CD8-positive, alpha-beta T cell (primary cell): ENCODE measurements at regions of chr4 and their contacts with region 1.

Region 1: GRCh38 chr4:43132010-43132582 is 239.6 kb downstream of the GRXCR1 start:
- DNase-seq: peak in 2 of 9 experiments; percentile 5 to 9
- ATAC-seq: no peak
- H3K4me3 ChIP-seq: no peak overlapping the region
- H3K4me3 Mint-ChIP-seq: no peak overlapping the region
- H3K27ac ChIP-seq: no peak overlapping the region
- H3K27ac Mint-ChIP-seq: no peak overlapping the region
- H3K4me1 ChIP-seq: no peaks in the 10 kb centered on the region
- H3K4me1 Mint-ChIP-seq: no peaks in the 10 kb centered on the region
- H3K27me3 ChIP-seq: no peaks in the 10 kb centered on the region
- H3K27me3 Mint-ChIP-seq: no peaks in the 10 kb centered on the region
- CTCF ChIP-seq: peak; percentile 32

Region 2: DNA sequence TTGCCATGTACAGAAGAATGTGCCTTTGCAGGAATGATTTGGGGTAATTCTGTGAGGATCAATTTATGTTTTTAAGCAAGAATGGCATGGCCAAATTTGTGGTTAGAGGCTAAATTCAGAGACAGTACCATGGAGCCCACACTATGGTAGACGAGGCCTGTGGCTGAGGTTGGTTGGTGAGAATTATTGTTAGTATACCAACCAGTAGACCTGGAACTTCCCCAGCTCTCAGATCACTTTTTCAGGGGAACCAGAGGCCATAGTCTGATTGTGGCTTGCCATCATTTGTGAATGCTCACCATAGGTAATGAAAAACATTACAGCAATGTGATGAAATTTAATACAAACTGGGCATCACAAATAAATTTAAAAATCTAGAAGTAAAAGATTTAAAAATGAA is 678.5 kb before region 1 on chr4:
- CTCF ChIA-PET with region 1: no interaction called
- POLR2A ChIA-PET with region 1: no interaction called
- intact Hi-C with region 1: no loop called
- DNase-seq: no peak
- ATAC-seq: no peak
- H3K4me3 ChIP-seq: no peak overlapping the region
- H3K4me3 Mint-ChIP-seq: no peak overlapping the region
- H3K27ac ChIP-seq: no peak overlapping the region
- H3K27ac Mint-ChIP-seq: no peak overlapping the region
- H3K4me1 ChIP-seq: no peaks in the 10 kb centered on the region
- H3K4me1 Mint-ChIP-seq: peaks cover 2% of the 10 kb centered on the region
- H3K27me3 ChIP-seq: no peaks in the 10 kb centered on the region
- H3K27me3 Mint-ChIP-seq: no peaks in the 10 kb centered on the region
- CTCF ChIP-seq: no peak

Region 3: DNA sequence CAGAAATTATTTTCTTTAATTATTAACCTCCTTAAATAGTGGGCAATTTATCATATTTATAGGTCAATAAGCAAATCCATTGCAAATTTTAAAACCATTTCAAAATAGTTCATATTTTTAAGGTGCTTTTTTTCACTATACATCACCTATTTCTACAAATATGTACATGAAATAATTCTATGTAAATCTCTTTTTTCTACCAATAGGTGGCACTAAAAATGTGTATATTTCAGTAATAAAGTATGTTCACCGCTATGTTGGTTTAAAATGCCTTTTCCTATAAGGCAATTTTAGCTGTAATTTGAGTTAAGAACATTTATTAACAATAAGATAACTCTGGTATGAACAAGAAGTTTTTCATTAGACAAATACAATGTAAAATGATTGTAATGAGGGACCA is 644.3 kb after region 1 on chr4:
- CTCF ChIA-PET with region 1: no interaction called
- POLR2A ChIA-PET with region 1: no interaction called
- intact Hi-C with region 1: no loop called
- DNase-seq: no peak
- ATAC-seq: no peak
- H3K4me3 ChIP-seq: no peak overlapping the region
- H3K4me3 Mint-ChIP-seq: no peak overlapping the region
- H3K27ac ChIP-seq: no peak overlapping the region
- H3K27ac Mint-ChIP-seq: no peak overlapping the region
- H3K4me1 ChIP-seq: no peaks in the 10 kb centered on the region
- H3K4me1 Mint-ChIP-seq: no peaks in the 10 kb centered on the region
- H3K27me3 ChIP-seq: no peaks in the 10 kb centered on the region
- H3K27me3 Mint-ChIP-seq: no peaks in the 10 kb centered on the region
- CTCF ChIP-seq: no peak

Region 4: DNA sequence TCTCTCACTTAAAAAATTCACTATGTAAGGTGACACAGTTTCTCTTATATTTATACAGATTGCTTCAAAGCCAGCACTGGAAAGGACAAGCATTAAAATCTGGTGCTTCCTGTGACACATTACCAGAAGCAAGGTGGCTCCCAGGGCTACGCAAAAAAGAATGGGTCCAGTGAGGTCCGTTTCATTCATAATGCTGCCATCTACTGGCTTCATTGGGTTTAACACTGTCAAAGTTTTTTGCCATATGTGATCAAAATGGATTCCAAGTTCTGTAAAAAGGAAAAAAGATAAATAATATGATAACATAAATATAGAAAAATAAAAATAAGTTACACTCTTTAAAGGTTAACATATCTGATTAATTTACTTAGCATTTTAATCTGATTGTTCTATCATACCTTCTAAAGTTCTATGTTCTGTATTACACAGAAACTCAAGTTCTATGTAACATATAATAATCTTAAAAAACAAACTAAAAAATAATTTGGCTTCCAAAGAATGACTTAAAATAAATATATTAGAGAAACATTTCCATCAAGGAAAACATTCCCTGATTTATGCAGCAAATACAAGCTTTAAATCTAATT is 1497.3 kb after region 1 on chr4:
- CTCF ChIA-PET with region 1: no interaction called
- POLR2A ChIA-PET with region 1: no interaction called
- intact Hi-C with region 1: loop called in 1 of 2 experiments (anchors 10 kb)
- DNase-seq: peak in 6 of 9 experiments; percentile 10 to 65 (median 32)
- ATAC-seq: peak; percentile 71
- H3K4me3 ChIP-seq: no peak overlapping the region
- H3K4me3 Mint-ChIP-seq: no peak overlapping the region
- H3K27ac ChIP-seq: no peak overlapping the region
- H3K27ac Mint-ChIP-seq: peak overlapping the region; percentile 42
- H3K4me1 ChIP-seq: no peaks in the 10 kb centered on the region
- H3K4me1 Mint-ChIP-seq: peaks cover 2% of the 10 kb centered on the region
- H3K27me3 ChIP-seq: no peaks in the 10 kb centered on the region
- H3K27me3 Mint-ChIP-seq: peaks cover 6% of the 10 kb centered on the region
- CTCF ChIP-seq: peak; percentile 74